Cardiac septum (tissue), 1 donor: ENCODE measurements at regions of chr5 and their contacts with region 1.

Region 1: DNA sequence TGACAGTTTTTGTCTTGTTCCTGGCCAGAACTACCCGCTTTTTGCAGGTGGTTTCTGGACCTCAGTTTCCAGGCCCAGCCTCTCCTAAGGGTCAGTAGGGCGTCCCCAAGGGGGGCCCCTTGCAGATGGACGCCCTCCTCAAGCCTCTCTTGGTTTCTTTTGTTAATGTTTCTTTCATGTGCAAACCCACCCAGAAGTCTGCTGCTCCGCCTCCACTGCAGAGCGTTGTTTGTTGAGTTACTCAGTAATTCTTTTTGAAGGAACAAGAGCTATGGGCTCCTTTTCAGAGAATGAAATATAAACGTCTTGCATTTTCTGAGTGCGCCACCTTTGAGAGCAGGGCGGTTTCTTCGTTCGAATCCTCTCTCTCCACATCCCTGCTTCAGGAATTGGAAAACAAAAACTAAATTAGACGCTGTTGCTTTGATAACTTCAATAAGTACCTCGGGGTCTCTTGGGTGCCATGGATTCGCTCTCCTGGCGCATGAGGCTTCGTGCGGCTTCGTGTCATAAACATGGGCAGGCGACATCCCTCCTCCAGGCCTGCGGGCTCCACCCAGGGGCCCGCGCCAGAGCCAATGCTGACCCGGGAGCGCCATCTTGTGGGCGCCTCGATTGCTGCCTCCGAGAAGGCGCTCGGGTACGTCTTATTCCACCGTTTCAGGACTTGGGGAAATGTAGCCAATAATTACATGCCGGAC is 38.3 kb upstream of the CKMT2 start:
- DNase-seq: peak; percentile 84

Region 2: DNA sequence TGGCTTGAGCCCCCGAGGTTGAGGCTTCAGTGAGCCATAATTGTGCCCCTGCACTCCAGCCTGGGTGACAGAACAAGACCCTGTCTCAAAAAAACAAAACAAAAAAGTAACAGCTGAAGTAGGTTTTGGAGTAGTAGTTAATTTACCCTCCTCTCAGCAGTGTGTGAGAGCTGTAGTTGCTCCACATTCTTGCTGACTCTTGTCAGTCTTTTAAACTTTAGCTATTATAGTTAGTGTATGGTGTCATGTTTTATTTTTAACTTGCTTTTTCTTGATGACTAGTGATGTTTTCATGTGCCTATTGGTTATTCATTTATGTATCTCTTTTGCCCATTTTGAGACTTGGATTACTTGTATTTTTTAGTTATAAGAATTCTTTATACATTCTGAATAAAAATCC is 487.1 kb before region 1 on chr5:
- intact Hi-C with region 1: loop called (anchors 10 kb)
- DNase-seq: no peak